Posterior vena cava (tissue), 2 donors: ENCODE measurements at regions of chr7 and their contacts with region 1.

Region 1: GRCh38 chr7:120894254-120894653 is 36.3 kb upstream of the TSPAN12 start:
- DNase-seq: no peak

Region 2: GRCh38 chr7:121519548-121520521 is 625.6 kb after region 1 on chr7:
- intact Hi-C with region 1: loop called in 1 of 2 experiments (anchors 5 kb)
- DNase-seq: no peak